IMR-90 (cell line): ENCODE measurements at regions of chr9 and their contacts with region 1.

Region 1: GRCh38 chr9:27276193-27277030 is 20.5 kb downstream of the EQTN start:
- DNase-seq: peak; percentile 67
- ATAC-seq: peak; percentile 70
- H3K4me3 ChIP-seq: no peak overlapping the region
- H3K27ac ChIP-seq: peak overlapping the region; percentile 14; the same call in 1 of the 2 replicates
- H3K4me1 ChIP-seq: peaks cover 4% of the 10 kb centered on the region
- H3K27me3 ChIP-seq: peaks cover 2% of the 10 kb centered on the region
- CTCF ChIP-seq: peak; percentile 84
- POLR2A ChIP-seq: no peak
- RAD21 ChIP-seq: peak; percentile 95

Region 2: DNA sequence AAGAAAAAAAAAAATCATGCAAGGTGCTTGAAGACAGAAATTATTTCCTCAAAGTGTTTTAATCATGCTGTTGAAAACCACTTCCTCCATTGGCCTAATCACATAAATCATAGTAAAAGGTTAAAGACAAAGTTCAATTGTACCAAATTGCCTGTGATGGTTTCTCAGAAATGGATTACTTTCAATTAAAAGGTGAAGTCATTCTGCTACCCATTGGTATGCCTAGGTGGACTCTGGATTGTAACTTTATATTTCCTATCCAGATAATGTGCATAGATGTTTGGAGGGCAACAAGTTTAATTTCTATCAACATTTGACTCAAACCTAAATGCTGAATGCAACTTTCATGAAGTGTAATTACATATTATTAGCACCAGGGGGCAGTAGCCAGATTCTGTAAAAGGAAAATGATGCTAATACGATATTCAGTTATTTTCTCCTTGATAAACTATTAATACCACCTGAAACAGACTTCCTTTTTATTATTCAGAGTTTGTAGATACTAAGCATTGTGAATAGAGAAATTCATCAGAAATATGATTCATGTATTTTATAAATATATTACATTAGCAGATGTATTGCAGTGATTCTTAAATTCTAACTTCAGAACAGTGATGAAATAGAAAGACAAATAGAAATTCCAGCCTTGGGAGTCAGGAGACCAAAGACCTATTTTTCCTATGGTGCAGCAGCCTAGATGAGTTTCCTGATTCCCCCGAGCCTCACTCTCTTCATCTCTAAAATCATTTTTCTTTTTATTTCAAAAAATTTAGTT is 532.0 kb before region 1 on chr9:
- CTCF ChIA-PET with region 1: no interaction called
- POLR2A ChIA-PET with region 1: no interaction called
- dilution Hi-C with region 1: no loop called
- in situ Hi-C with region 1: loop called (anchors 10 kb)
- intact Hi-C with region 1: loop called (anchors 1 kb)
- DNase-seq: peak; percentile 38
- ATAC-seq: no peak
- H3K4me3 ChIP-seq: no peak overlapping the region
- H3K27ac ChIP-seq: no peak overlapping the region
- H3K4me1 ChIP-seq: no peaks in the 10 kb centered on the region
- H3K27me3 ChIP-seq: no peaks in the 10 kb centered on the region; the same call in 1 of the 2 replicates
- CTCF ChIP-seq: peak; percentile 70
- POLR2A ChIP-seq: no peak
- RAD21 ChIP-seq: peak; percentile 54

Region 3: GRCh38 chr9:26946753-26947727 is 329.4 kb before region 1 on chr9 and contains the start of gene PLAA:
- CTCF ChIA-PET with region 1: no interaction called
- POLR2A ChIA-PET with region 1: no interaction called
- dilution Hi-C with region 1: no loop called
- in situ Hi-C with region 1: no loop called
- intact Hi-C with region 1: loop called (anchors 2 kb)
- DNase-seq: peak; percentile 92
- ATAC-seq: peak; percentile 97
- H3K4me3 ChIP-seq: peak within 1 kb of the TSS; percentile 80
- H3K27ac ChIP-seq: peak within 1 kb of the TSS; percentile 100
- H3K4me1 ChIP-seq: peaks cover 2% of the 10 kb centered on the region; the same call in 1 of the 2 replicates
- H3K27me3 ChIP-seq: no peaks in the 10 kb centered on the region
- CTCF ChIP-seq: no peak
- POLR2A ChIP-seq: peak; percentile 74
- RAD21 ChIP-seq: no peak
- total RNA-seq, gene PLAA: 24.4 and 37.8 TPM in 2 replicates

Region 4: DNA sequence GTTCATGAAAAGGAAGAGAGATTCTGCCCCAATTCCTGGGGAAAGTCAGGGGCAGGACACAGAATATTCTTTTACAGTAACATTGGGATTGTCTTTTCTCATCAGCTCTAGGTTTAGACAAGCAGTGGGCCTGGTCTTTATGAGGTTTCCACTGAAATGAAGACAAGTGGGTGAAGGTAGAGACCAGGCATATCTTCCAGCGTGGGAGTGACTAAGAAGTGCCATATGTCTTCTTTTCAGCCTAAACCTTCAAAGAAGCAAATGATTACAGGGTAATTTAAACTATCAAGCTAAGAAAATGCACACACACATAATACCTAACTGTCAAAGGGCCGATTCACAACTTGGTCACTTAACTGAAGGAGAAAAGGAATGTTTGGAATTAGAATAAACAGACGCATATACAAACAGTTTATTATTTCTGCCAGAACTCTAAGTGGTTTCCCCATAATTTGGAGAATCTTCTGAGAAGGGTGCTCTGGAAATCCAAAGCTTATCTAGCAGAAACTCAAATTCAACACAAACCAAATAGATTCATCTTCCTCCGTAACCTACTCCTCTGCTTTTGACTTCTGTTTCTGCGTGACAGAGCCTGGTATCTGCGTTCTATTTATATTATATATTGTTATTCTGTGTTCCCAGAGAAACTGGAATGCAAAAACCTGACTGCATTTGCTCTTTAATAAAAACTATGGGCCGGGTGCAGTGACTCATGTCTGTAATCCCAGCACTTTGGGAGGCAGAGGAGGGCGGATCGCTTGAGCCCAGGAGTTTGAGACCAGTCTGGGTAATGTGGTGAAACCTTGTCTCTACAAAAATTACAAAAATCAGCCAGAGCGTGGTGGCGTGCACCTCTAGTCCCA is 189.4 kb before region 1 on chr9:
- CTCF ChIA-PET with region 1: no interaction called
- POLR2A ChIA-PET with region 1: no interaction called
- dilution Hi-C with region 1: no loop called
- in situ Hi-C with region 1: no loop called
- intact Hi-C with region 1: loop called (anchors 5 kb)
- DNase-seq: peak; percentile 90
- ATAC-seq: peak; percentile 78
- H3K4me3 ChIP-seq: peak overlapping the region; percentile 8; the same call in 1 of the 2 replicates
- H3K27ac ChIP-seq: peak overlapping the region; percentile 97
- H3K4me1 ChIP-seq: peaks cover 20% of the 10 kb centered on the region
- H3K27me3 ChIP-seq: no peaks in the 10 kb centered on the region
- CTCF ChIP-seq: no peak
- POLR2A ChIP-seq: peak; percentile 72; the same call in 1 of the 2 replicates
- RAD21 ChIP-seq: no peak; the same call in 1 of the 2 replicates

Region 5: DNA sequence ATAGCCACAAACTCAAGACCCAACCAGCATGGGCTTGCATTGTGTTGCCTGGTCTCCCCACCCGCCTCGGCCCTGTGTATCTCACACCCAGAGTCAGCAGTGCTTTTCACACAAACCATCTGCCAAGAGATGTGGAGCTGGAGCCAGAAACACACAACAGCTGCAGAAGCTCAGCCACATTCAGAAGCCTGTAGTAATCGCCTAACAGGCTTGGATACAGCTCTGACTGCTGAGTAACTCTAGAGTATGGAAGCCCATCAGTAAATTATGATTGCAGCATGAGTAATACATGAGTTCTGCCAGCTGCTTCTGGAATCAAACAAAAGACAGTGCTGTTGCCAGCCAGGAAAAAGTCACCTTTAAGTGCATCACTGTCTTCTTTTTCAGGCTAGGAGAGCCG is 151.4 kb before region 1 on chr9:
- CTCF ChIA-PET with region 1: no interaction called
- POLR2A ChIA-PET with region 1: no interaction called
- dilution Hi-C with region 1: no loop called
- in situ Hi-C with region 1: no loop called
- intact Hi-C with region 1: loop called (anchors 2 kb)
- DNase-seq: peak; percentile 99
- ATAC-seq: peak; percentile 83
- H3K4me3 ChIP-seq: no peak overlapping the region
- H3K27ac ChIP-seq: peak overlapping the region; percentile 96
- H3K4me1 ChIP-seq: peaks cover 19% of the 10 kb centered on the region
- H3K27me3 ChIP-seq: no peaks in the 10 kb centered on the region
- CTCF ChIP-seq: no peak
- POLR2A ChIP-seq: no peak
- RAD21 ChIP-seq: peak; percentile 19; the same call in 1 of the 2 replicates

Region 6: DNA sequence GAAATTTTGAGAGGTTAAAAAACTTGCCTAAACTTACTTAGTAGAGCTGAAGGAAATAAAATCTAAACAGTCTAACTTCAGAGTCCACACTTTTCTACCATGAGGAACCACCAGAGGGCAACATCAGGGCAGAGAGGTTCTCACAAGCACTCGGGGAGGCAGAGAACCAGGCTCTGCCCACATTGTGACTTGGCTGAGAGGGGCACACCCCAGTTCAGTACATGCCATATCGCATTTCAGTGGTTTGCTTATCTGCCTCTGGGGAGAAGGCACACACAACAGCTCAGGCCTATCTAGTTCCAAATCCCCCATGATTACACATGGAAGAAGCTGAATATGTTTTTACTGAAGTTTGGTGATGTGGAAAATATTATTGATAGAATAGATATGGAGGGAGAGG is 28.7 kb before region 1 on chr9:
- CTCF ChIA-PET with region 1: interaction called, 4 read pairs
- POLR2A ChIA-PET with region 1: no interaction called
- dilution Hi-C with region 1: no loop called
- in situ Hi-C with region 1: no loop called
- intact Hi-C with region 1: loop called (anchors 2 kb)
- DNase-seq: peak; percentile 59
- ATAC-seq: peak; percentile 93
- H3K4me3 ChIP-seq: no peak overlapping the region
- H3K27ac ChIP-seq: no peak overlapping the region
- H3K4me1 ChIP-seq: no peaks in the 10 kb centered on the region
- H3K27me3 ChIP-seq: no peaks in the 10 kb centered on the region
- CTCF ChIP-seq: peak; percentile 53
- POLR2A ChIP-seq: no peak
- RAD21 ChIP-seq: peak; percentile 49